Caco-2 (cell line): ENCODE measurements at regions of chr3 and their contacts with region 1.

Region 1: GRCh38 chr3:69013253-69014021 is at the start of gene EOGT:
- DNase-seq: peak; percentile 89 to 96
- H3K4me3 ChIP-seq: peak within 1 kb of the TSS; percentile 90
- H3K4me3 Mint-ChIP-seq: peak within 1 kb of the TSS; percentile 91
- H3K27ac Mint-ChIP-seq: peak within 1 kb of the TSS; percentile 83
- H3K4me1 ChIP-seq: 0 out of 2 replicates have a peak, but pooled peaks cover 6% of the 10 kb centered on the region
- H3K4me1 Mint-ChIP-seq: no peaks in the 10 kb centered on the region
- H3K27me3 ChIP-seq: no peaks in the 10 kb centered on the region
- H3K27me3 Mint-ChIP-seq: no peaks in the 10 kb centered on the region
- CTCF ChIP-seq: peak; percentile 74 to 76
- total RNA-seq, gene EOGT: 16.1 and 17.1 TPM in 2 replicates

Region 2: DNA sequence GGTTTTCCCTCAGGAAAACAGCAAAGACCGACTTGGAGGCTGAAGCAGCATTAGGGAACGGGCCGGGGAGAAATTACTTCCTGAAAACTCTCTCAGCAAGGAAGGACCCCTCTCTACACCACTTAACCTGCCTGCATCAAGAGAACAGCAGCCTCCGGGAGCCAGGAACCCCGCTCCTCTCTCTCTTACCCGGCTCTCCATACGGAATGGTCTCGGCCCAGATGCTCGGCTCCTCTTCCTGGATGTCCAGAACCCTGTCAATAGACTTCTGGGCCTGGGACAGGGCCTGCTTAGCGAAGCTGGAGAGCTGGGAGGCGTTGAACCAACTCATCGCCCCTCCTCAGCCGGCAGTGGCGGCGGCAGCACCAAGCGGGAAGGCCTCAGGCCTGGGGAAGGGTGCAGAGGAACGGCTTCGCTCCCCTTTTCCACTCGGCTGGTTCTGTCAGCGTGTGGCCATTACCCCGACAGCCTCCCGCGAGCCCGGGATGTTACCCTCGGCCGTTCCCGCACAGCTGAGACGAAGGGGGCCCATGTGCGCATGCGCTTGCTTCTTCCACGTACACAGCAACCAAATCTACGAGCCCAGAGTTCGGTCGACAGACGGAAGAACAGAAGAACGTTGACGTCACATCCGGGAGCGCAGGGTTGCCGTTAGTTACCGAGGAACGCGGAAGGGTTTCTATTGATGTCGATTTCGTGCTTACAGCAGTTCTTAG is 38.5 kb after region 1 on chr3 and contains the start of gene TMF1:
- CTCF ChIA-PET with region 1: no interaction called
- POLR2A ChIA-PET with region 1: interaction called, 4 read pairs
- intact Hi-C with region 1: loop called (anchors 2 kb)
- DNase-seq: peak; percentile 96 to 98
- H3K4me3 ChIP-seq: peak within 1 kb of the TSS; percentile 79
- H3K4me3 Mint-ChIP-seq: peak within 1 kb of the TSS; percentile 97
- H3K27ac Mint-ChIP-seq: peak within 1 kb of the TSS; percentile 99
- H3K4me1 ChIP-seq: peaks cover 8% of the 10 kb centered on the region
- H3K4me1 Mint-ChIP-seq: peaks cover 7% of the 10 kb centered on the region
- H3K27me3 ChIP-seq: no peaks in the 10 kb centered on the region
- H3K27me3 Mint-ChIP-seq: no peaks in the 10 kb centered on the region
- CTCF ChIP-seq: no peak
- total RNA-seq, gene TMF1: 30.2 and 35.0 TPM in 2 replicates